Activated CD4-positive, alpha-beta T cell treated with anti-CD3 and anti-CD28 coated beads, Interleukin-2, amount 10 ng/mL, durations not matched to agents 24 days and 14 days (primary cell): ENCODE measurements at regions of chr1 and their contacts with region 1.

Region 1: DNA sequence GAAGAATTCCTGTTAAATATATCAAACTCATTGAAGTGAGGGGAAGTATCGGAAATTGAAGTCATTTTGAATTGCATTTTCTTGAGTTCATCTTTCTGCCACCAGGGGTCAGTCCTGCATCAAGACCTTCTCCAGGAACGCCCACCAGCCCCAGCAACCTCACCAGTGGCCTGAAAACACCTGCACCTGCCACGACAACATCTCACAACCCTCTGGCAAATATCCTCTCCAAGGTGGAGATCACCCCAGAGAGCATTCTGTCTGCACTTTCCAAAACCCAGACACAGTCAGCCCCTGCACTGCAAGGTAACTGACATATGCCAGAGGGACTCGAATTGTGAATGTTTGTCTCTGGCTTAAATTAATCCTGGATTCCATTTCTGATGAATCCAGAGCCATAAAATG is 22.8 kb upstream of the TARS2 start:
- DNase-seq: peak; percentile 90
- H3K4me3 Mint-ChIP-seq: no peak overlapping the region
- H3K27ac Mint-ChIP-seq: no peak overlapping the region
- H3K4me1 Mint-ChIP-seq: peaks cover 2% of the 10 kb centered on the region
- H3K27me3 Mint-ChIP-seq: no peaks in the 10 kb centered on the region

Region 2: DNA sequence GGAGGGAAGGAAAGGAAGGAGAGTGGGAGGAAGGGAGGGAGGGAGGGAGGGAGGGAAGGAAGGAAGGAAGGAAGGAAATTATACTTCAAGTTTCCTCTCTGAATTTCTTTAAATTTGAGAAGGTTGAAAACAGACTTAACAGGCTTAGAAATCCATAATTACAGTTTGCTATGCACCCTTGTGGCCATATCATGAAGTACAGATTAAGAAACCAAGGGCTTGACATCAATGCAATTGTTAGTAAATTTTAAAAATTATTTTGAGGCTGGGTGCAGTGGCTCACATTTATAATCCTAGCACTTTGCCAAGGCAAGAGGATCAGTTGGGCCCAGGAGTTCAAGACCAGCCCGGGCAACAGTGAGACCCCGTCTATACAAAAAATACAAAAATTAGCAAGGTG is 242.9 kb before region 1 on chr1:
- intact Hi-C with region 1: no loop called
- DNase-seq: peak; percentile 67
- H3K4me3 Mint-ChIP-seq: no peak overlapping the region
- H3K27ac Mint-ChIP-seq: no peak overlapping the region
- H3K4me1 Mint-ChIP-seq: peaks cover 12% of the 10 kb centered on the region
- H3K27me3 Mint-ChIP-seq: no peaks in the 10 kb centered on the region

Region 3: DNA sequence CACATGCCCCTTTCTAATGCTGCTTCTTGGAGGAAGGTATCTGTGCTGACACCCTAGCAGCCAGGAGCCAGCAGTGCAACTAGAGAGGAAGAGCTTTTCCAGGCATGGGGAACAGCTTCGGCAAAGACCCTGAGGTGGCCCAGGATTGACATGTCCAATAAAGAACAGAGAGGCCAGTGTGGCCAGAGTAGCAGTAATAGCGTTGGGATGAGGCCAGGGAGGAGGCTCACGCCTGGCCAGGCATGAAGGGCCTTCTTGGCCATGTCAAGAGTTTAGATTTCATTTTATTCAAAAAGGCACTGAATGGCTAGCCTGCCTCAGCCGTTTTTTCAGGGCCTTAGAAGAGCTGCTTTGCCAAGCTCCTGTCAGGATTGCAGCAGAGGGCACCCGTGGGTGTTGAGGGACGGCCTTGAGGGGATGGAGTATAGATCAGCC is 68.5 kb after region 1 on chr1:
- intact Hi-C with region 1: loop called (anchors 1 kb)
- DNase-seq: no peak
- H3K4me3 Mint-ChIP-seq: no peak overlapping the region
- H3K27ac Mint-ChIP-seq: no peak overlapping the region
- H3K4me1 Mint-ChIP-seq: peaks cover 3% of the 10 kb centered on the region
- H3K27me3 Mint-ChIP-seq: no peaks in the 10 kb centered on the region

Region 4: DNA sequence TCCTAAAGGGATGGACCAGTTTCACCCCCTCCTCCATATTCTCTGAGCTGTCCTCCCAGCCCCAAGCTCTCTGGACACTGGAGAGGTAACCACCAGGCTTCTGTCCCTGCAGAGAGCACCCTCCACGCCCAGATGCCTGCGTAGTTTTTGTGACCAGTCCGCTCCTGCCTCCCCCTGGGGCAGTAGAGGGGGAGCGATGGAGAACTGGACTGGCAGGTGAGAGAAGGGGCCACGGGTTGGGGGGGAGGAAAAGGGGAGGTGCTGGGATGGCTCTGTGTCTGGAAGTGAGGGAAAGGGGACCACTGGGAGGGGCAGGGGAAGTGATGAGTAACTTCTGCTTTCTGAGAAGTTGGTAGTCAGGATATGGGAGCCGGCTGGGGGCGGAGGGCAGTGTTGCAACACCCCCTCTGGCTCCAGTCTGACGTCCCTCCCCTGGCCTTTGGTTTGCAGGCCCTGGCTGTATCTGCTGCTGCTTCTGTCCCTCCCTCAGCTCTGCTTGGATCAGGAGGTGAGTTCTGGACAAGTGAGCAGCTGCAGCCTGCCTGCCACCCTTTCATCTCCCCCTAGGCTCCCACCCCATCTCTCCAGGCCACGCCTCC is 87.8 kb after region 1 on chr1:
- intact Hi-C with region 1: loop called (anchors 5 kb)
- DNase-seq: peak; percentile 66
- H3K4me3 Mint-ChIP-seq: peak overlapping the region; percentile 28
- H3K27ac Mint-ChIP-seq: no peak overlapping the region
- H3K4me1 Mint-ChIP-seq: peaks cover 24% of the 10 kb centered on the region
- H3K27me3 Mint-ChIP-seq: peaks cover 3% of the 10 kb centered on the region

Region 5: DNA sequence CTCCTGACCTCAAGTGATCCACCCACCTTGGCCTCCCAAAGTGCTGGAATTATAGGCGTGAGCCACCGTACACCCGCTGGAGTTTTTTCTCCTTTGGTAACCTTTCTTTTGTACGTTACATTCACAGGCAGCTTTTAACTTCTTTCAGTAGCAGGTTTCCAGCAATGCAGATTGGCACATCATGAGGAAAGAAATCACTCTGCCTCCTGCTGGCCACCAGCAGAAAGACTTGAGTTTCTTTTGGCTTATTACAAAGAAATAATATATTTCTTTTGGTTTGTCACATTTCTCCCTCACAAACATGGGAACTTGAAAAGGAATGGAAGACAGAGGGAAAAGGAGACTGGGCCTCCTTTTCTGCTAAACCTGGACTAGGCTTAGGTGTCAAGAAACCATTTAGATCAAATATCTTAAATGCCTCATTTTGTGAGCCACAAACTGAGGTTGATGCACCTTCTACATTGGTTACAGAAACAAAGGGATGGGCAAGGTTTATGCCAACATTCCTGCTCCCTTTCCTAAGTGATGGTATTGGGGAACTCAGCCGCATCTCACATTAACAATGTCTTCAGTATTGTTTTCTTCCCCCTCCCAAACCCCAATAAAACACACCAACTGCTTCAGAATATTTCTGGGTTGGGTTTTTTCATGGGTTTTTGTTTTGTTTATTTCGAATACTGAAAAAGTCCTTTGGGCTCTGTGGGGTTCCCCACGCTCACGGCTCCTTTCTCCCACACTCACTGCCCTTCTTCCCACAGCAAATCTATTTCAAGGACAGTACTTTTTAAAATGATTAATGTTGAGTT is 157.3 kb after region 1 on chr1:
- intact Hi-C with region 1: loop called (anchors 5 kb)
- DNase-seq: peak; percentile 88
- H3K4me3 Mint-ChIP-seq: peak overlapping the region; percentile 67
- H3K27ac Mint-ChIP-seq: peak overlapping the region; percentile 82
- H3K4me1 Mint-ChIP-seq: peaks cover 70% of the 10 kb centered on the region
- H3K27me3 Mint-ChIP-seq: no peaks in the 10 kb centered on the region